ENCODE measurements at regions of chr7 and their contacts with region 1.

Region 1: GRCh38 chr7:876167-876967 is at the start of gene GET4:
- DNase-seq: peak; percentile 87
- H3K4me3 Mint-ChIP-seq: peak within 1 kb of the TSS; percentile 99
- H3K27ac Mint-ChIP-seq: peak within 1 kb of the TSS; percentile 93
- H3K4me1 Mint-ChIP-seq: no peaks in the 10 kb centered on the region
- H3K27me3 Mint-ChIP-seq: no peaks in the 10 kb centered on the region
- CTCF ChIP-seq: peak; percentile 20
- total RNA-seq, gene GET4: 32.6 and 43.9 TPM in 2 replicates

Region 2: DNA sequence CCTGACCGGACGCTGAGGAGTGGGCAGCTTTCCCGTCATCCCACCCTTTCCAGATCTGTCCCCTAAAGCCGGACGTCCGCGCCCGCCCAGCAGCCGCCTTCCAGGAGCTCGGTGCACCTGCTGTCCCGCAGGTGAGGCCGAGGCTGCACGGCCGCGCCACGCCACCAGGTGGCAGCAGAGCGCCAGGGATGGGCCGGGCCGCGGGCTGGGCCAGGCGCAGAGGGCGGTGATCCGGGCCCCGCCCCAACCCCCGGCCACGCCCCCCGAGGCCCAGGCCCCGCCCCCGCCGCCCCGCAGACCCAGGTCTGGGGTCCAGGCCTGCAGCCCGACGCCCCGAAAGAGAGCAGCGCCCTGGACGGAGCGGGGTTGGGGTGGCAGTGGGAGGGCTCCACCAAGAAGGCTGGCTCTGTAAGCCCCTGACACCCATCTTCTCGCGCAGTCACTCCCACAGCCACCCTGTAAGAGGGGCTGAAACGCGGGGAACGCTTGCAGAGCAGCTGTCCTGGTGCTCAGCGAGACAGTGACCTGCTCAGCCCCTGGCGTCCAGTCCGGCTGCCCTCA is 554.2 kb before region 1 on chr7:
- CTCF ChIA-PET with region 1: interaction called, 7 read pairs
- POLR2A ChIA-PET with region 1: interaction called, 4 read pairs
- intact Hi-C with region 1: loop called (anchors 10 kb)
- DNase-seq: peak; percentile 62
- H3K4me3 Mint-ChIP-seq: no peak overlapping the region
- H3K27ac Mint-ChIP-seq: no peak overlapping the region
- H3K4me1 Mint-ChIP-seq: no peaks in the 10 kb centered on the region
- H3K27me3 Mint-ChIP-seq: peaks cover 39% of the 10 kb centered on the region
- CTCF ChIP-seq: peak; percentile 94

Region 3: DNA sequence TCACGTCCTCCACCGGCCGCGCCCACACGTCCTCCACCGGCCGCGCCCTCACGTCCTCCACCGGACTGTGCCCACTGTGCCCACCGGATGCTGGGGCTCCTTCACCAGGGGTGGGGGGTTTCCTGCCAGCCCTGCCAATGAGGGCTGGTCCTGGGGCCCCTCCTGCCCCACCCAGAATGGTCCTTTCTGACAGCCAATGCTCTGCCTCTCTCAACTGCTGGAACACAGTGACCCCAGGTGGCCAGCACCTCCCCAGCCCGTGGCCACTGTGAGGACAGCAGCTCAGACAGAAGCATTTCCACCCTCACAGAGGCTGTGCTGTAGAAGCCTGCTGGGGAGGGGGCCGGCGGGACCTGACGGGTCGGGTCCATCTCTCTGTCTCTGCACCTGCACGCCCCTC is 240.0 kb before region 1 on chr7:
- CTCF ChIA-PET with region 1: no interaction called
- POLR2A ChIA-PET with region 1: no interaction called
- intact Hi-C with region 1: no loop called
- DNase-seq: peak; percentile 10
- H3K4me3 Mint-ChIP-seq: no peak overlapping the region
- H3K27ac Mint-ChIP-seq: no peak overlapping the region
- H3K4me1 Mint-ChIP-seq: no peaks in the 10 kb centered on the region
- H3K27me3 Mint-ChIP-seq: no peaks in the 10 kb centered on the region
- CTCF ChIP-seq: no peak

Region 4: DNA sequence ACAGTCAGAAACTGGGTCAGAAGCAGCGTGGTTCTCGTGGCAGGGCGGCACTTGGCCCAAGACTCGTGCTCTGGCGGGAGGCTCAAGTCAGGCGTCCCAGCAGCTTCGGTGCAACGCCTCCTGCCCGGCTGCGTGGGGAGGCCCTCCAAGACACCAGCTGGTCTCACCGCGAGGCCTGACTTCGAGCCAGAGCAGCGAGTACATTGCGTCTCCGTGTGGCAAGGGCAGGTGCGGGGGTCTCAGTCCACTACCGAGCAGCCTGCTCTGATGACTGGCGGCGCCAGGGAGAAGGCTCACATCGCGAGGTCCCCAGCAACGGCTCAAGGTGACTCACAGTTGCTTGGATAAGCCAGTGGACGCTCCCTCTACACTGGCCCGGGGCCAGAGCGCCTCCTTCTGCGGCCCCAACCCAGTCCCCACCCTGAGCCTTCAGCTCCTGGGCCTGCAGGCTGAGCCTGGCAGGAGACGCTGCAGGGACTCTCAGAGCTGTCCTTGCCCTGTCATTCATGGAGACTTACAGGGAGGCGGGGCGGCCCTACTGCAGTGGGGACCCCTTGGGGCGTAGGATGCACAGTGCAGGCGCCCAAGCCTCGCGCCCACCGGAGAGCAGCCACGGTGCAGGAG is 107.4 kb before region 1 on chr7:
- CTCF ChIA-PET with region 1: interaction called, 10 read pairs
- POLR2A ChIA-PET with region 1: interaction called, 6 read pairs
- intact Hi-C with region 1: no loop called
- DNase-seq: no peak
- H3K4me3 Mint-ChIP-seq: peak overlapping the region; percentile 79
- H3K27ac Mint-ChIP-seq: no peak overlapping the region
- H3K4me1 Mint-ChIP-seq: no peaks in the 10 kb centered on the region
- H3K27me3 Mint-ChIP-seq: no peaks in the 10 kb centered on the region
- CTCF ChIP-seq: no peak

Region 5: GRCh38 chr7:786472-787255 is 89.7 kb before region 1 on chr7:
- CTCF ChIA-PET with region 1: interaction called, 96 read pairs
- POLR2A ChIA-PET with region 1: interaction called, 15 read pairs
- intact Hi-C with region 1: loop called (anchors 1 kb)
- DNase-seq: peak; percentile 71
- H3K4me3 Mint-ChIP-seq: no peak overlapping the region
- H3K27ac Mint-ChIP-seq: peak overlapping the region; percentile 23
- H3K4me1 Mint-ChIP-seq: no peaks in the 10 kb centered on the region
- H3K27me3 Mint-ChIP-seq: no peaks in the 10 kb centered on the region
- CTCF ChIP-seq: peak; percentile 83

Region 6: DNA sequence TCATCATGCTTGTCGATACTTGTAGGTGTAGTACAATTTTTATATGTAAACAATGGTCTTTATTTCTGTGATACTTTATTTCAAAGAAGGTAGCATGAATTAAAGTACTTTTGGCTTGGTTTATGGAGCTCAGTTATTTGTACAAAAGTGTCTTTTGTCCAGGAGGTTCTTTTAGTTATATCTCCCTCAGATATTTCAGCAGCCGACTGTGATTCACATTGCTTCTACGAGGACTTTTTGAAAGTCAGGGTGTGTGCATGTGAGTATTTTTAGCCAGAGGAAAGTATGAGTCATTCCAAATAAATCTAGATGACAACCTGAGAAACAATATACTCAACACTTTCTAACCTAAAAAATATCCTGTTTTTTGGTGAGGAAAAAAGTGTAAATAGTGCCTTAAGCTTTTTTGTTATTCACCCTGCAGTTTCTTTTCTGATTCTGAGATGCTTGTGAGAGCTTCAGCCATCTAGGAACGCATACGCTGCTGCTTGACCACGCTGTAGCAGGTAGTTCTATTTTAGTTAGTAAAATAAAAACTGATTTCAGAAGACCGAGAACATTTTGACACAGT is 44.7 kb before region 1 on chr7:
- CTCF ChIA-PET with region 1: interaction called, 39 read pairs
- POLR2A ChIA-PET with region 1: interaction called, 39 read pairs
- intact Hi-C with region 1: no loop called
- DNase-seq: peak; percentile 93
- H3K4me3 Mint-ChIP-seq: peak overlapping the region; percentile 66
- H3K27ac Mint-ChIP-seq: peak overlapping the region; percentile 100
- H3K4me1 Mint-ChIP-seq: peaks cover 34% of the 10 kb centered on the region
- H3K27me3 Mint-ChIP-seq: no peaks in the 10 kb centered on the region
- CTCF ChIP-seq: no peak

Region 7: DNA sequence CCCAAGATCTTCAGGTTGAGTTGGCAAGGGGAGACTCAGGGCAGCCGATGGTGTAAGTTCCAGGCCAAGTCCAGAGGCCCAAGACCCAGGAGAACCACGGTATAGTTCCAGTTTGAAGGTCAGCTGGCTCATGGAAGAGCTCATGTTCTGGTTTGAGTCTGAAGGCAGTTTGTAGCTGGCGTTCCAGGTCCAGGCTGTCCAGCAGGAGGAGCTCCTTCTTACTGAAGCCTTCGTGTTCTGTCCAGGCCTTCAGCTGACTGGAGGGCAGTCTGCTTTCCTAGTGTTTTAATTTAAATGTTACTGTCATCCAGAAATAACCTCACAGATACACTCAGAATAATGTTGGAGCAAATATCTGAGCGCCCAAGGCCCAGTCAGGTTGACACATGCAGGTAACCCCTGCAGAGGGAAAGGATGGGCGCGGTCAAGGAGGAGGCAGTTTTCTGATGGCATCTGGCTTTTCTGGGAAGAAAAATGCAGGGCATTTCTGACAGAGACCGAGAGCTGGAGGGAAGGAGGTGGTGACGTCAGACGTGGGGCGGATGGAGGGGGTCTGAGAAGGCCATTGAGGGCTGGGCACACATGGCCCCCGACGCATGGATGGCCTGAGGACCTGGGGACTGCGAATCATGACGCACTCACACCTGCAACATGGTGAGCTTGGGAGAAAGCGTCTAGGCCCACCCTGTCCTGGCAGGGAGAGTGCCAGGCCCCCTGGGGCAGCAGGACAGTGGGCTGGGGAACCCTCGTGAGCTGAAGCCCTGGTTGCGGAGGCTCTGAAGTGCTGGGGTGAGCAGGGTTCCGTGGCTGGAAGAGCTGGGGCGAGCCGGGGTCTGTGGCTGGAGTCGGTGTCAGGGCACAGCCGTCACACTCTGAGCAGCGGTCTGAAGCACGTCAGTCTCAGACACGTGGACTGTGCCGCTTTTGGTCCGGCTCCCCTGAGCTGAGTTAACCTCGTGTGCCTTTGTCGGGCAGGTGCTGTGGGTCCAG is 39.7 kb before region 1 on chr7:
- CTCF ChIA-PET with region 1: interaction called, 39 read pairs
- POLR2A ChIA-PET with region 1: interaction called, 39 read pairs
- intact Hi-C with region 1: no loop called
- DNase-seq: peak; percentile 75
- H3K4me3 Mint-ChIP-seq: peak overlapping the region; percentile 28
- H3K27ac Mint-ChIP-seq: peak overlapping the region; percentile 100
- H3K4me1 Mint-ChIP-seq: peaks cover 31% of the 10 kb centered on the region
- H3K27me3 Mint-ChIP-seq: no peaks in the 10 kb centered on the region
- CTCF ChIP-seq: peak; percentile 46

Region 8: DNA sequence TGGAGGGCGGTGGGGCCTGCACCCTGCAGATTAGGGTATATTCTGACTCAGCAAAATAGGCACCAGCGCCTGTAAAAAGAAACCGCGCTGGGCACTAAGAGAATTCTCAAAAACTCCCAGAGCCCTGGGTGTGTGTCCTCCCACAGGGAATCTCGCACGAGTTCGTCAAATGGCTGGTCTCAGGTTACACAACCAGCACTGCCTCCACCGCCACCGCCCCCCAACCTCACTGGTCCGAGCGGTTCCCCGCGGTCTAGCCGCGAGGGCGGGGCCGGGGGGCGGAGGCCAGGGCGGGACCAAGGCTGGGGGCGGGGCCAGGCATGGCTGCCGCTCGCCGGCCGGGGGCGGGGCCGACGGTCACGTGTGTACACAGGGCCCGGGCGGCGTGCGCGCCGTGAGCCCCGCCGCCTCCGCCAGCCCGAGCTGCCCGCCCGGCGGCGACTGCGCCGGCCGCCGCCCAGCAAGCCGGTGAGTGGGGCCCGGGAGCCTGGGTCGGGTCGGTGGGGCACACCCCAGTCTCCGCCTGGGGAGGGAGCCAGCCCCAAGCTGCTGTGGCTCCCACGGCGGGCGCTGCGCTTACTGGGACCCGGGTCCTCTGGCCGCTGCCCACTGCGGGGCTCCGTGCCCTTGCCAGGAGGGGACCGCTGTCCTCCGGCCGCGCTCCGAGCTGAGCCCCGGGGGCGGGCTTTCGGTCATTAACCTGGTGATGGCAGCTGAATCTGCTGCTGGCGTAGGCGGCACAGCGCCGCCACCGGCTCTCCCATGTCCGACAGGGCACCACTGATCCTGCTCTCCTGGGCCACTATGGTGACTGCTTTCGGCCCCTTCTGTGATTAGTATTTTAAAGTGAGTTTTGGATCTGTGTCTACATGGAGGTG is 168.1 kb after region 1 on chr7 and contains the start of gene GPR146:
- CTCF ChIA-PET with region 1: no interaction called
- POLR2A ChIA-PET with region 1: no interaction called
- intact Hi-C with region 1: no loop called
- DNase-seq: peak; percentile 96
- H3K4me3 Mint-ChIP-seq: peak within 1 kb of the TSS; percentile 68
- H3K27ac Mint-ChIP-seq: peak within 1 kb of the TSS; percentile 79
- H3K4me1 Mint-ChIP-seq: peaks cover 11% of the 10 kb centered on the region
- H3K27me3 Mint-ChIP-seq: no peaks in the 10 kb centered on the region
- CTCF ChIP-seq: peak; percentile 34
- total RNA-seq, gene GPR146: 0.27 TPM in 1 of 2 replicates, not detected in the other